GM12878 (cell line): ENCODE measurements at regions of chr2 and their contacts with region 1.

Region 1: DNA sequence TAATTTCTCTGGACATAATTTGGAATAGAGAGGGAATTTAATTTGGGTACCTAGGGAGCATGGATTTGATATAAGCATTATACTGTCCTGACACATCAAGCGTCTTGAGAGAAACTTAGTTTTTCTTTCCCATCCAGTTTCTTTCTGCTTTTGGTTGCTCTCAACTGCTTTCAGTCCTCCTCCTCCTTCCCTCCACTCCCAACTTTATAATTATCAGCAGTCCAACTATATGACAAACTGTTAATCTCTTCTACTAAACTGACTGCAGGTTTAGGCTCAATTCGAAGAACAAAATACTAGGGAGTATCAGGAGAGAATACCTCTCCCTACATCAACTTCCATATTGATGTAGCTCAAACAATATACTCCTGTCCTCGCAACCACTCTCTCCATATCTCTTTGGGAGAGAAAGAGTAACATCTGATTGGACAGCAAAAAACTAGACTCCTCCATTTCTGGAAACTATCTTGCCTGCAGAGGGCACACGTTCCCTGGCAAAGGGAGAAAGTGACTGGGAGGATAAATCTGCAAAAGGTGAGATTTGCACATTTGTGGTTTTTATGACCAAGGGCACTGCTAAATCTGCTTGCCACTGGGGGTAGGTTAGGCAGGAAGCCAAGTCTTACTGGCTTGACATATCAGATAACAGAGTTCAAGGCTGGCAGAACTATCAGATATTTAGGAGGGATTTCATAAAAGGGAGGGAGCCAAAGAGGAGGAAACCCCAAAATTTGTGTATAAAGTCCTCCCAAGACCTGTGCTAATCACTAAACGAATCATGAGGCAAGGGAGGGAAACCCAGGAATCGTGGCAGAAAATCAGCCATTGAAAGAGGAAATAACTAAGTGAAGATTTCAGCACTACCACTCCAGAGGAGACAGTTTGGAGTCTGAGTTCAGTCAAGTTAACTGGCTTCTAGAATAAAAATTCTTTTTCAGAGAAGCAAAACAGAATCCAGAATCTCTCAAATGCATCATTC is 40.0 kb downstream of the ICA1L start:
- DNase-seq: peak; percentile 61
- ATAC-seq: peak; percentile 97
- H3K4me3 ChIP-seq: no peak overlapping the region
- H3K27ac ChIP-seq: no peak overlapping the region
- H3K4me1 ChIP-seq: peaks cover 5% of the 10 kb centered on the region; the same call in 1 of the 2 replicates
- H3K27me3 ChIP-seq: no peaks in the 10 kb centered on the region
- CTCF ChIP-seq: peak; percentile 70 to 84 (median 71)
- EP300 ChIP-seq: no peak
- POLR2A ChIP-seq: no peak
- RAD21 ChIP-seq: peak; percentile 90

Region 2: DNA sequence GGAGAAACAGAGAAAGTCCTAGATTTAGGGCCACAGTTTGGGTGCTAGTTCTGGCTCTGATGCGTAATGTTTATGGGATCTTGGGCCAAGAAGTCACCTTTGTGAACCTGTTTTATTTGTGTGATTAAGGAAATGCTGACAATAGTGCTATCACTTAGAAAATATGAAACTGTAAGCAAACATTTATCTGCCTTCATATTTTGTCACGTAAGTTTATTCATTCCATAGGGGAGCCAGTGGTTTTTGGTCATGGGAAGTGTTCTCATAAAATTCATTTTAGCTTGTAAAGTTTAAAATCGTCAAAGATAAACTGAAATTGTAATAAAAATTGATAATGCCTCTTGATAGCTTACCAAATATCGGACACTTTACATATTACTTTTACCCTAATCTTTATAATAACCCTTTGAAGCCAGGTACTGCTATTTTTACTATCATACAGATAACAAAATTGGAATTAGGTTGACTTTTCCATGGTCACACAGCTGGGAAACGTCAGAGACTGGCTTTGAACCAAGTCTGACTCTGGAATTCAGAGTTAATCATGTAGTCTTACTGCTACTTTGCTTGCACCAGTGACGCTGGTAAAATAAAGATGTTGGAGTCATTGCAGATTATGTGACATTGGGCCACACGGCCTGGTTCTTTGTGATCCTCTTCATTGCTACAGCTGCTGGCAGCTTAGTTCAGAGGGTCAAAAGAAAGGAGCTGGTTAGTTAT is 59.6 kb before region 1 on chr2:
- CTCF ChIA-PET with region 1: no interaction called
- POLR2A ChIA-PET with region 1: no interaction called
- RAD21 ChIA-PET with region 1: no interaction called
- SMC1A ChIA-PET with region 1: no interaction called
- in situ Hi-C with region 1: no loop called
- intact Hi-C with region 1: no loop called
- DNase-seq: no peak
- ATAC-seq: no peak
- H3K4me3 ChIP-seq: no peak overlapping the region
- H3K27ac ChIP-seq: no peak overlapping the region
- H3K4me1 ChIP-seq: no peaks in the 10 kb centered on the region
- H3K27me3 ChIP-seq: no peaks in the 10 kb centered on the region
- CTCF ChIP-seq: no peak
- EP300 ChIP-seq: no peak
- POLR2A ChIP-seq: no peak
- RAD21 ChIP-seq: no peak

Region 3: DNA sequence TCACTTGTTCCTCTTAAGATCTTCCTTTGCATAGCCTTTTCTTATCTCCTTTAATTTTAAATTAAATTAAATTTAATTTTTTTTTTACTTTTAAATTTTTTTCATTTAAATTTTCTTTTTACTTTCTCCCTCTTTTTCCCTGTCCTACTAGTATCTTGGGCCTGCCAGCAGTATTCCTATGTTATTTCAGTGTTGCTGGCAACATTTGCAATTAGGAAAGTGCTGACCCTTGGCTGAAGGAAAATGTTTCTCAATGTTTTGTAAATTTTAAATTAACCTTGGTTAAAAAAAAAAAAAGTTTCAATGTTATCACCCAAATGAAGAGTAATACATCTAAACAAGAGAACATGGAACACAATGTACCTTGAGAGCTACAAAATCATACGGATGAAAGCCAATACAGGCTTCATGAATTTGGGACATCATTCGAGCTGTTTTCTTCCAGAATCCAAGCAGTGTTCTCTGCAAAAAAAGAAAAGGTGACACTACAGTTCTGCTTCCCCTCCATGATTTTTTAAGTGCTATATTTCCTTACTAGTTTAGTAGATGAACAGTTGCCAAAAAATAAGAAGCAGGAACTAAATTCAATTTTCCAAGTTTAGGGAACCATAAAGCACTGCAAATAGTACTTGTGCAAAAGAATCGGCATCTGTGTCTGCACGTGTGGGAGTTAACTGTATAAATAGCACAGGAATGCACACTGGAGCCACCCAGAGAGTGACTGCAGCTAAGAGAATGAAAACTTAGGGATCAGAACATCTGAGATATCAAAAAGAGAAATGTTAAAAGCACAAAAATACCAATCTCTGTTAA is 15.8 kb before region 1 on chr2:
- CTCF ChIA-PET with region 1: no interaction called
- POLR2A ChIA-PET with region 1: no interaction called
- RAD21 ChIA-PET with region 1: no interaction called
- SMC1A ChIA-PET with region 1: no interaction called
- in situ Hi-C with region 1: no loop called
- intact Hi-C with region 1: no loop called
- DNase-seq: no peak
- ATAC-seq: no peak
- H3K4me3 ChIP-seq: no peak overlapping the region
- H3K27ac ChIP-seq: no peak overlapping the region
- H3K4me1 ChIP-seq: no peaks in the 10 kb centered on the region
- H3K27me3 ChIP-seq: no peaks in the 10 kb centered on the region
- CTCF ChIP-seq: no peak
- EP300 ChIP-seq: no peak
- POLR2A ChIP-seq: no peak
- RAD21 ChIP-seq: no peak

Region 4: DNA sequence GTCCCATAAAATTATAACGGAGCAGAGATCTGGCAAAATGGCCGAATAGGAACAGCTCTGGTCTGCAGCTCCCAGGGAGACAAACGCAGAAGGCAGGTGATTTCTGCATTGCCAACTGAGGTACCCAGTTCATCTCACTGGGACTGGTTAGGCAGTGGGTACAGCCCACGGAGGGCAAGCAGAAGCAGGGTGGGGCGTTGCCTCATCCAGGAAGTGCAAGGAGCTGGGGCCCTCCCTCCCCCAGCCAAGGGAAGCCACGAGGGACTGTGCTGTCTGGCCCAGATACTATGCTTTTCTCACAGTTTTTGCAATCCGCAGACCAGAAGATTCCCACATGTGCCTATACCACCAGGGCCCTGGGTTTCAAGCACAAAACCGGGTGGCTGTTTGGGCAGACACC is 17.3 kb after region 1 on chr2:
- CTCF ChIA-PET with region 1: interaction called, 6 read pairs
- POLR2A ChIA-PET with region 1: no interaction called
- RAD21 ChIA-PET with region 1: interaction called, 3 read pairs
- SMC1A ChIA-PET with region 1: interaction called, 18 read pairs
- in situ Hi-C with region 1: no loop called
- intact Hi-C with region 1: no loop called
- DNase-seq: no peak
- ATAC-seq: peak; percentile 86
- H3K4me3 ChIP-seq: no peak overlapping the region
- H3K27ac ChIP-seq: no peak overlapping the region
- H3K4me1 ChIP-seq: peaks cover 11% of the 10 kb centered on the region
- H3K27me3 ChIP-seq: no peaks in the 10 kb centered on the region
- CTCF ChIP-seq: no peak
- EP300 ChIP-seq: no peak
- POLR2A ChIP-seq: no peak
- RAD21 ChIP-seq: no peak

Region 5: GRCh38 chr2:203122301-203122986 is 290.9 kb after region 1 on chr2:
- CTCF ChIA-PET with region 1: no interaction called
- POLR2A ChIA-PET with region 1: no interaction called
- RAD21 ChIA-PET with region 1: no interaction called
- SMC1A ChIA-PET with region 1: no interaction called
- in situ Hi-C with region 1: no loop called
- intact Hi-C with region 1: loop called (anchors 1 kb)
- DNase-seq: no peak
- ATAC-seq: no peak
- H3K4me3 ChIP-seq: no peak overlapping the region
- H3K27ac ChIP-seq: no peak overlapping the region
- H3K4me1 ChIP-seq: no peaks in the 10 kb centered on the region
- H3K27me3 ChIP-seq: no peaks in the 10 kb centered on the region
- CTCF ChIP-seq: peak in 1 of 3 experiments; percentile 34; a peak in 1 of 6 replicates
- EP300 ChIP-seq: no peak
- POLR2A ChIP-seq: no peak
- RAD21 ChIP-seq: peak; percentile 54; the same call in 1 of the 2 replicates

Region 6: DNA sequence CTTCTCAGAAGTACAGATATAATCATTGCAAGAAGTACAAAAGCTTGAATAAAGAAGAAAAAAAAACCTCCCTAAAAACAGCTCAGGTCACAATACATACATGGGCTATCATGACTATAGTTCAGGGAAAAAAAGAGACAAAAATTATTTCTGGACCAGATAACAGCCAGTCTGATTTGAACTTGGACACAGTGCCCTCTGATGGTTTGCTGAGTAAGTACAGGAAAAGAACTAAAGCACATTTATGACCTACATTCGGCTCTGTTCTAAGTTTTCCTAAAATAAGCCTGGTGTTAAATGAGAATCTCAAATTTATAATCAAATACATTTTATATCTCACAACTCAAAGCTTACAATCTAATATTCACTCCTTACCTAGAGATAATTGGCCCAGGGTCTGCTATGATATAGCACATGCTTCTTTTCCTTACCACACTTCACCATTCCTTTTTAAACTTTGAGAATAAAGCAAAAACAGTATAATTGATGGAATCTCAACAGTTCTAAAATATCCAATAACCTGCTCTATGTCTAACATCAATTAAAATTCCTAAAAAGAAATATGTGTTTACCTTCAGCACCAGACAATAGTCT is 622.4 kb after region 1 on chr2:
- CTCF ChIA-PET with region 1: interaction called, 8 read pairs
- POLR2A ChIA-PET with region 1: no interaction called
- RAD21 ChIA-PET with region 1: interaction called, 3 read pairs
- SMC1A ChIA-PET with region 1: interaction called, 5 read pairs
- in situ Hi-C with region 1: no loop called
- intact Hi-C with region 1: loop called (anchors 5 kb)
- DNase-seq: peak; percentile 4
- ATAC-seq: peak; percentile 86
- H3K4me3 ChIP-seq: no peak overlapping the region
- H3K27ac ChIP-seq: no peak overlapping the region
- H3K4me1 ChIP-seq: no peaks in the 10 kb centered on the region
- H3K27me3 ChIP-seq: no peaks in the 10 kb centered on the region
- CTCF ChIP-seq: peak; percentile 67 to 80 (median 73); a peak in 5 of 6 replicates
- EP300 ChIP-seq: no peak
- POLR2A ChIP-seq: no peak
- RAD21 ChIP-seq: peak; percentile 89